ENCODE measurements at regions of chr12 and their contacts with region 1.

Region 1: GRCh38 chr12:101305226-101305779 is 25.4 kb downstream of the UTP20 start:
- DNase-seq: no peak
- ATAC-seq: no peak
- H3K4me3 ChIP-seq: no peak overlapping the region
- H3K4me3 Mint-ChIP-seq: no peak overlapping the region
- H3K27ac ChIP-seq: no peak overlapping the region
- H3K27ac Mint-ChIP-seq: no peak overlapping the region
- H3K4me1 ChIP-seq: no peaks in the 10 kb centered on the region
- H3K4me1 Mint-ChIP-seq: no peaks in the 10 kb centered on the region
- H3K27me3 ChIP-seq: no peaks in the 10 kb centered on the region
- H3K27me3 Mint-ChIP-seq: no peaks in the 10 kb centered on the region
- CTCF ChIP-seq: no peak

Region 2: GRCh38 chr12:101343893-101344292 is 38.6 kb after region 1 on chr12:
- CTCF ChIA-PET with region 1: no interaction called
- POLR2A ChIA-PET with region 1: no interaction called
- intact Hi-C with region 1: loop called in 1 of 2 experiments (anchors 5 kb)
- DNase-seq: no peak
- ATAC-seq: no peak
- H3K4me3 ChIP-seq: no peak overlapping the region
- H3K4me3 Mint-ChIP-seq: no peak overlapping the region
- H3K27ac ChIP-seq: no peak overlapping the region
- H3K27ac Mint-ChIP-seq: no peak overlapping the region
- H3K4me1 ChIP-seq: no peaks in the 10 kb centered on the region
- H3K4me1 Mint-ChIP-seq: no peaks in the 10 kb centered on the region
- H3K27me3 ChIP-seq: no peaks in the 10 kb centered on the region
- H3K27me3 Mint-ChIP-seq: no peaks in the 10 kb centered on the region
- CTCF ChIP-seq: no peak

Region 3: DNA sequence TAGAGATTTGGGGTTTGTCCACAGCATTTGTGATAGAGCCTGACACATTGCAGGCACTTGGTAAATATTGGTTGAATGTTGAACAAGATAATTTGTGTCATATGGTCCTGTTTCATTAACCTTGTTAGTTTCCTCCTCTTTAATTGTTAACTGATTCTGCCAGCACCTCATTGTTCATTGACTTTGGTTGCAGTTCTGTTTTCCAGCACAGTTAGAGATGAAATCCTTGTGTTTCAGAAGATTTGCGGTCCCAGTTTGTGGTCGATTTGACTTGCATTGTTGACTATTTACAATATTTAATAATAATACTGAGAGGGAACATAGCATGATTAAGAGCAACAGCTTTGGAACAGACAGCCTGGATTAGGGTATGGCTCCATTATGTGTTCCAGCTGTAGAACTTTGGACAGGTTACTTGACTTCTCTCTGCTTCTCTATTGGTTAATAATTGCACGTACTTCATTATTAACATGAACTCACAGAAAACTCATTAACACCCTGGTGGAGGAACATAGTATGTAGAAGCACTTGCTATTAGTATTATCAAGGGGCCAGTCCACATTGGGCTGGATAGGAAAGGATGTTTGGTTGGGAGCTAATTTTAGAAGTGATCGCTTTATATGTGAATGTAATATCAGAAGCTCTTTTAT is 580.7 kb after region 1 on chr12:
- CTCF ChIA-PET with region 1: no interaction called
- POLR2A ChIA-PET with region 1: no interaction called
- intact Hi-C with region 1: no loop called
- DNase-seq: no peak
- ATAC-seq: no peak
- H3K4me3 ChIP-seq: no peak overlapping the region
- H3K4me3 Mint-ChIP-seq: no peak overlapping the region
- H3K27ac ChIP-seq: no peak overlapping the region
- H3K27ac Mint-ChIP-seq: no peak overlapping the region
- H3K4me1 ChIP-seq: no peaks in the 10 kb centered on the region
- H3K4me1 Mint-ChIP-seq: no peaks in the 10 kb centered on the region
- H3K27me3 ChIP-seq: no peaks in the 10 kb centered on the region
- H3K27me3 Mint-ChIP-seq: no peaks in the 10 kb centered on the region
- CTCF ChIP-seq: no peak

Measured in CD4-positive, alpha-beta T cell (primary cell).